SK-N-SH (cell line): ENCODE measurements at regions of chr4 and their contacts with region 1.

Region 1: DNA sequence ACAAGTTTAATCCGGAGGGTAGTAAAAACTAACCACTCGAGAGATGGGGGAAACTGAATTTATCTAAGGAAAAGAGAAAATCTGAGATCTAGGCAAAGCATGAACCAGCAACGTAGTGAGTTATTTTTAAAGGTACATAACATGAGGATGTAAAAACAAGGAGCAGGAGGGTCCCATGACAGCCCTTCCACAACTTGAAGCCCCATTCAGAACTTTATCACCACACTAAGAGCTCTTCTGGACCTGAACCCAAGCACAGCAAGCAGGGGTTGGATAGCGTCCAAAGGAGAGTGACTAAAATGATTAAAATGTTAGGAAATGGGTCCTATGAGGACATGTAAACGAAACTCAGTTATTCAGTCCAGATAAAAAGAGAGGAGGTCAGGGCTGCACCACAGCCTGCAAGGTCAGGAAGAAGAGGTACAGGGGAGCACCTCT is 16.2 kb downstream of the SH3RF1 start:
- DNase-seq: no peak
- H3K4me3 ChIP-seq: peak overlapping the region in 1 of 2 experiments; percentile 28; a peak in 2 of 4 replicates
- H3K27ac ChIP-seq: peak overlapping the region; percentile 73 to 91; a peak in 3 of 4 replicates
- H3K4me1 ChIP-seq: peaks cover 44 to 78% of the 10 kb centered on the region in 2 experiments
- H3K27me3 ChIP-seq: no peaks in the 10 kb centered on the region
- CTCF ChIP-seq: no peak
- EP300 ChIP-seq: peak in 1 of 2 experiments; percentile 39; a peak in 1 of 4 replicates
- RAD21 ChIP-seq: no peak

Region 2: DNA sequence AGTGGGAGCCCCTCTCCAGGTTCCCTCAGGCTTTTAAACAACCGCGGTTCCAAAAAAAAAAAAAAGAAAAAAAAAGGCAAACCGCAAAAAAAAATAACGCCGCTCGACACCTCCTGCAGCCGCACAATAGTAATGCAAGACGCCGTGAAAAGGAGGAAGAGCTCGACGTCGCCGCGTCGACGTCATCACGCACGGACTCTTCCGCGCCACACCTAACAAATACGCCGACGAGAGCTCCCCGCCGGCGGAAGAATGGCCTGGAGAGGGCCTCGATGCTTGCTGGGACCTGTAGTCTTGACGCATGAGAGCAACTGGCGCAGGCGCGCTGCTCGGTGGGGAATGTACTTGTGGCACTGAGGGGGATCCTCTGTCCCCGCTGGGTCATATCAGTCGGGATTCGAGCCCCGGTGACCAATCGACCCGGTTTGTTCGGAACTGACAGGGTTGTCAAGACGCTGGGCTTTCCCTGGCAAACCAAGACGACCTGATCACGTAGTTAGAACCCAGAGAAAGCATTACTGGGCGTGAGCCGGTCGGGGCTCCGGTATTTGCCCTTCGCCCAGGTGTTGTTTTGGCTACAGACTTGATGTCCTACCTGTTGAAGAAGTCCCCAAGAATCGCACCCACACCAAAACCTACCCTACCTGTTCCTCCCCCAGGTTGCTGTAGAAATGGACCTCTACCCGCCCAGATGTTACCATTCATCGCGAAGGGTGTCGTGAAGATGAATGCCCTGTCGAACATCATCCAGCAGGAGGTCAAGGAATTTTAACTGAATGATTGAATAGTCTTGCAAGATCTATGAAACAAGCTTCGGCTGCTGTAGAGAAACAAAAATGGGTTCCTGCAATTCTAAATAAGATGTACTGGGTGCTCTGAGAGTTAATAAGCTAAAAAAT is 244.2 kb before region 1 on chr4 and contains the start of gene CBR4:
- CTCF ChIA-PET with region 1: no interaction called
- POLR2A ChIA-PET with region 1: no interaction called
- DNase-seq: peak; percentile 86
- H3K4me3 ChIP-seq: peak within 1 kb of the TSS; percentile 74 to 86
- H3K27ac ChIP-seq: peak within 1 kb of the TSS; percentile 91 to 96
- H3K4me1 ChIP-seq: peaks cover 0 to 19% of the 10 kb centered on the region in 2 experiments; a peak in 2 of 4 replicates
- H3K27me3 ChIP-seq: no peaks in the 10 kb centered on the region
- CTCF ChIP-seq: peak; percentile 20
- EP300 ChIP-seq: no peak
- RAD21 ChIP-seq: peak; percentile 32; the same call in 1 of the 2 replicates
- polyA plus RNA-seq, gene CBR4: 2.8 and 4.1 TPM in 2 replicates

Region 3: DNA sequence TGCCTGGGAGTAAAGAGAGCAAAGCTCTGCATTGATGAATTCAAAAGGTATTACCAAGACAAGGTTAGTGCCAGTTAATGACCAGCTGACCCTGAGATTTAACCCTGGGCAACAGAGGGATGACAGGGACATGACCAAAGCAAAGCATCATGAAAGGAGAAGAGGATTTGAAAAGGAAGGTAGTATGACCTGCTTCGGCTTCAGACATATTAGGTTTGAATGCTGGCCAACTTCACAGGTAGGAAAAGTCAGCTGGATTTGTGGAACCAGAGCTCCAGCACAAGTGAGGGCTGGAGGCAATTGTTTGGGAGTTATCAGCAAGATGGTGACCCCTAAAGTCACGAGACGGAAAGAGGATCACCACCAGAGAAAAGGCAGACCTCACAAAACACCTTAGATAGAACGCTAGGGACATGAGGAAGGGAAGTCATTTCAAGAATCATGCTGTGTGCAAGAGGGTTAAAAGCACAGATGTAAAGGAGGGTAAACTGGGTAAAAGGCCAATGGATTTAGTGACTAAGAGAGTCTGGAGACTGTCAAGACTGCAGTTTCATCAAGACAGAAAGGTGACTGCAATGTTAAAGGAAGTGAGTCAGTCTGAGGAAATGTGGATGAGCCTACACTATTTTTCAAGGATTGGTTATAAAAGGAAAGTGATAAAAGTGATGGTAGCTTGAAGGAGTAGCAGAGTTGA is 29.4 kb before region 1 on chr4:
- CTCF ChIA-PET with region 1: no interaction called
- POLR2A ChIA-PET with region 1: no interaction called
- DNase-seq: no peak
- H3K4me3 ChIP-seq: peak overlapping the region in 1 of 2 experiments; percentile 28; a peak in 2 of 4 replicates
- H3K27ac ChIP-seq: peak overlapping the region; percentile 87 to 98
- H3K4me1 ChIP-seq: peaks cover 4 to 21% of the 10 kb centered on the region in 2 experiments
- H3K27me3 ChIP-seq: no peaks in the 10 kb centered on the region
- CTCF ChIP-seq: no peak
- EP300 ChIP-seq: peak; percentile 84 to 100
- RAD21 ChIP-seq: no peak

Region 4: DNA sequence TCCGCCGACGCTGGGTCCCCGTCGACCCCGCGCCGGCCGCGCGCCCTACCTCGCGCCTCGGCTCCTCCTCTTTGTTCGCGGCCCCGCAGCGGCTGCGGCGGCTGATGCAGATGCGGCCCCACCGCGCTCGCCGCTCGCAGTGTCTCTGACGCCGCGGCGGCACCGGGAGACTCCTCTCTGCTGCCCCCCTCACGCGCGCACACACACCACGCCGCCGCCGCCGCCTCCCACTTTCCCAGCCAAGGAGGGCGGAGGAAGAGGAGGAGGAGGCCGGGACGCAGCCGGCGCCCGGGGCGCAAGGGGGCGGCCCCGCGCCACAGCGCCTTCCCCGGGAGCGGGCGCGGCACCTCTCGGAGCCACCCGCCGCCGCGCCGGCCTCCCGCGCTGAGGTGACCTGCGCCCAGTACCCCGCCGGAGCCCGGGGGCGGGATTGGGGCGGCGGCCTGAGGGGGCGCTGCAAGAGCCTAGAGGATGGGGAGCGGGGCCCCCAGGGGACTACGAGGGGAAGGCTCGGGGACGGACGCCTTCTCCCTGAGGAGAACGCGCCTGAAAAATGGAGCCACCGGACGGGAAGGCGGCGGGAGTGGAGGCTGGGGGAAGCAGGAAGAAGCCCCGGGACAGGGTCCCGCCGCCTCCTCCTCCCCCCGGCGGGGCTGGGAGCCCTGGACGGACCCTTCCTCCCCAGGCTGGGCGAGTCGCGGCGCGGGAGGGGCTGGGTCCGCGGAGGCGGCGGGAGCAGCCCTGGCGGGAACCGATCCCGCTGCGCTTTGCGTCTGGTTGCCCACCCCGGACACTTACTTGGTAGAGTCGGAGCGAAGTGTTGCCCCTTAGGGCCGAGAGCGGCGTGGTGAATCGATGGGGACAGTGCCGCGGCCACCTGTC is 16.5 kb after region 1 on chr4 and contains the start of gene SH3RF1:
- CTCF ChIA-PET with region 1: interaction called, 12 read pairs
- POLR2A ChIA-PET with region 1: interaction called, 3 read pairs
- DNase-seq: peak; percentile 91
- H3K4me3 ChIP-seq: peak within 1 kb of the TSS; percentile 85 to 90
- H3K27ac ChIP-seq: peak within 1 kb of the TSS; percentile 72 to 94
- H3K4me1 ChIP-seq: peaks cover 7 to 9% of the 10 kb centered on the region in 2 experiments; a peak in 3 of 4 replicates
- H3K27me3 ChIP-seq: no peaks in the 10 kb centered on the region
- CTCF ChIP-seq: peak; percentile 37
- EP300 ChIP-seq: no peak
- RAD21 ChIP-seq: no peak
- polyA plus RNA-seq, gene SH3RF1: 22.0 and 22.1 TPM in 2 replicates

Region 5: GRCh38 chr4:169383724-169384123 is 129.2 kb after region 1 on chr4:
- CTCF ChIA-PET with region 1: no interaction called
- POLR2A ChIA-PET with region 1: no interaction called
- DNase-seq: no peak
- H3K4me3 ChIP-seq: no peak overlapping the region
- H3K27ac ChIP-seq: peak overlapping the region in 1 of 2 experiments; percentile 76; a peak in 2 of 4 replicates
- H3K4me1 ChIP-seq: 0 out of 4 replicates have a peak, but pooled peaks cover 0 to 5% of the 10 kb centered on the region in 2 experiments
- H3K27me3 ChIP-seq: no peaks in the 10 kb centered on the region
- CTCF ChIP-seq: no peak
- EP300 ChIP-seq: peak in 1 of 2 experiments; percentile 54; a peak in 1 of 4 replicates
- RAD21 ChIP-seq: no peak